Activated CD4-positive, alpha-beta memory T cell treated with anti-CD3 and anti-CD28 coated beads, Interleukin-2, amount 10 ng/mL, durations not matched to agents 7 days and 5 days (primary cell): ENCODE measurements at regions of chr6 and their contacts with region 1.

Region 1: DNA sequence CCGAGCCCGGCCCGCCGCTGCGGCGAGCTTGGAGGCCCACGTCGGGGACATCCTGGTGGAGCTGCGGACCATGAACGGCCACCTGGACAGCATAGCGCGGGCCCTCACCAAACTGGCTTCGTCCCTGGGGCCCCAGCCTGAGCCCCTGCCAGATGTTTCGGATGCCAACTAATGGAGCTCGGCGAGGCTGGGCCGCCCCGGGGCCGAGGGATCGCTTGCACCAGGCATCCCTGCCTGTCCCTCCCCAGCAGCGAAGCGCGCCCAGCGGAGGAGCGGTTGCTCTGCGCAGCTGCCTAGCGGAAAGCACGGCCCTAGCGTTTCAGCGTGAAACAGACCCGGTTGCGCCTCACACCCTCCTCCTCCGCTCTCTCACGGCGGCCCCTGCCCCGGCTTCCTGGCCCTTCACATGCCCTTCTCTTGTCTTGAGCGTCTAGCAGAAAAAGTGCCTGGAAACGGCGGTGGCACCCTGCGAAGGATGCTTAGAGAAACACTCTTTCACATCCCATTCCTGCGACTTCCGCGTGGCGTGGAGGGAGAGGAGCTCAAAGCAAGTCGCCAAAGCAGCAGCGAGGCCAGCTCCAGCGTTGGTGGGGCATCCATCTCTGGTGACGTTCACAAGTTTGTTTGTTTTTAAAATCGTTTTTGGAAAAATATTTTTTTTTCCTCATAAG is 286.0 kb upstream of the SUPT3H start:
- DNase-seq: peak; percentile 63
- H3K4me3 Mint-ChIP-seq: peak overlapping the region; percentile 47
- H3K27ac Mint-ChIP-seq: peak overlapping the region; percentile 21
- H3K4me1 Mint-ChIP-seq: peaks cover 80% of the 10 kb centered on the region
- H3K27me3 Mint-ChIP-seq: peaks cover 10% of the 10 kb centered on the region

Region 2: GRCh38 chr6:45388328-45388727 is 275.4 kb before region 1 on chr6:
- CTCF ChIA-PET with region 1: no interaction called
- POLR2A ChIA-PET with region 1: no interaction called
- DNase-seq: no peak
- H3K4me3 Mint-ChIP-seq: no peak overlapping the region
- H3K27ac Mint-ChIP-seq: no peak overlapping the region
- H3K4me1 Mint-ChIP-seq: no peaks in the 10 kb centered on the region
- H3K27me3 Mint-ChIP-seq: no peaks in the 10 kb centered on the region

Region 3: GRCh38 chr6:45677381-45678284 is 13.9 kb after region 1 on chr6:
- CTCF ChIA-PET with region 1: interaction called, 3 read pairs
- POLR2A ChIA-PET with region 1: interaction called, 27 read pairs
- DNase-seq: peak; percentile 74
- H3K4me3 Mint-ChIP-seq: peak overlapping the region; percentile 52
- H3K27ac Mint-ChIP-seq: peak overlapping the region; percentile 70
- H3K4me1 Mint-ChIP-seq: peaks cover 53% of the 10 kb centered on the region
- H3K27me3 Mint-ChIP-seq: peaks cover 1% of the 10 kb centered on the region

Region 4: DNA sequence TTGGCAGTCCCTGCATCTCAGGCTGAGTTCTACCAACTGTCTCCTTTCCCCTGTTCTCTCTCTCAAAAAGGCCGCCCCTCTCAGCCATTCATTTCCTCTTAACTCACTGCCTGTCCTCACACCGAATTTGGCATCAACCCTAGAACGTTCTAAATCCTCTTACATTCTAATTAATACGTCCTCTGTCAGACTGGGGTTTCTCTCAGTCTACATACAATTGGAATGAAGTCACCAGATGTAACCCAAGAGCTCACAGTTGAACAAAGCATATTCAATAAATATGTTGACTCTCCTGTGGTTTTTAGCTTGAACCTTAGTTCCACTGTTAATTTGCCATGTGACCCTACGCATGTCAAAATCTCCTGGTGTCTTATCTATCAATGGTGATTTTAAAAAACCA is 82.4 kb after region 1 on chr6:
- CTCF ChIA-PET with region 1: no interaction called
- POLR2A ChIA-PET with region 1: no interaction called
- DNase-seq: no peak
- H3K4me3 Mint-ChIP-seq: no peak overlapping the region
- H3K27ac Mint-ChIP-seq: no peak overlapping the region
- H3K4me1 Mint-ChIP-seq: peaks cover 18% of the 10 kb centered on the region
- H3K27me3 Mint-ChIP-seq: peaks cover 8% of the 10 kb centered on the region

Region 5: DNA sequence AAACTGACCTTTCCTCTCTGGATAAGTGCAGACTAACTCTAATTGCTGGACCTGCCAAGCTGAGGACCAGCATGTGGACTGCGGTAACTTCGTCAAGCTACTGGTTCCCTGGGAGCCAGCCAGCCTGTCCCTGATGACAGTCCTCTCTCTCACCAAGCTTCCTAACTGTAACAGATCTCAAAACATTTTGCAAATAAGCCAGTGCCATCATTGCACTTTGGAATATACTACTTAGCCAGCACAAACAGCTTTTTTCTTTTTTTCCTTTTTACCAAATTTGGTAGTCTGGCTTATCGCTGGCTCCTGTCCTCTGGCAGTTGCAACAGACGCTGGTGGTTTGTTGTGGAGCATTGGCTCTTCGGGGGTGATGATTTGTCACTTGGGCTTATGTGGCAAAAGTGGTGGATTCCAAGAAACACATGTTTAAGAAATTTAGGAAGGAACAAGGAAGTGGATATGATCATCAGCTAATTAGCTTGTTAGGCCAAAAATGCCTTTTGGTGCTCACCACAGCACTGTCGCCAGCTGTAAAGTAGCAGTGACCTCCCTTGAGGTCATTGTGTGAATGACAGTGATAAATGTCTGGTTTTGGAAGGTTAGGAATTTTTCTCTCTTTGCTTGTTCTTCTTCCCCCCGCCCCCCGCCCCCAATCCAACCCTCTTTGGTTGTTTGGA is 180.3 kb after region 1 on chr6:
- CTCF ChIA-PET with region 1: no interaction called
- POLR2A ChIA-PET with region 1: no interaction called
- DNase-seq: no peak
- H3K4me3 Mint-ChIP-seq: no peak overlapping the region
- H3K27ac Mint-ChIP-seq: no peak overlapping the region
- H3K4me1 Mint-ChIP-seq: peaks cover 1% of the 10 kb centered on the region
- H3K27me3 Mint-ChIP-seq: no peaks in the 10 kb centered on the region